Upper lobe of right lung (tissue), 1 donor: ENCODE measurements at regions of chr1 and their contacts with region 1.

Region 1: DNA sequence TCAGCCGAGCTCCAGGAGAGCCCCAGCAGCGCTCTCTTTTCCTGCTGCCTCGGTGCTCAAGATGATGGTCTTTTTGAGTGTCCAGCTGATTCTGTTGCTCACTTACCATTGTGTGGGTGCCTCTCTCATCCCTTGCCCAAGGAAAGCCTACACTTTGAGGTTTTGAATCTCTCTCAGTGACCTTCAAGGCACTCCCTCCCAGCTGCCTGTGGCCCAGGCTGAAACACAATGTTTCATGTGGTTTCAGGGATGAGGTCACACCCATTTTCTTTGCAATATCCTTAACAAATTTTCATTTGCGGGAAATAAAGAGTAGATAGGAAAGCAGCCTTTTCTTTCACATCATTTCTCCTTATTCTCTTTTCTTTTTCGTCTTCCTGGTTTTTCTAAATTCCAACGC is 12.6 kb upstream of the MRPS14 start:
- DNase-seq: no peak
- ATAC-seq: no peak
- H3K4me3 ChIP-seq: no peak overlapping the region
- H3K27ac ChIP-seq: no peak overlapping the region
- H3K4me1 ChIP-seq: no peaks in the 10 kb centered on the region
- H3K27me3 ChIP-seq: no peaks in the 10 kb centered on the region
- CTCF ChIP-seq: no peak

Region 2: GRCh38 chr1:174942547-174943255 is 93.2 kb before region 1 on chr1:
- intact Hi-C with region 1: no loop called
- DNase-seq: no peak
- ATAC-seq: peak; percentile 90
- H3K4me3 ChIP-seq: no peak overlapping the region
- H3K27ac ChIP-seq: peak overlapping the region; percentile 28
- H3K4me1 ChIP-seq: peaks cover 19% of the 10 kb centered on the region
- H3K27me3 ChIP-seq: no peaks in the 10 kb centered on the region
- CTCF ChIP-seq: no peak

Region 3: GRCh38 chr1:174953285-174954072 is 82.4 kb before region 1 on chr1:
- intact Hi-C with region 1: no loop called
- DNase-seq: no peak
- ATAC-seq: no peak
- H3K4me3 ChIP-seq: no peak overlapping the region
- H3K27ac ChIP-seq: peak overlapping the region; percentile 0
- H3K4me1 ChIP-seq: peaks cover 11% of the 10 kb centered on the region
- H3K27me3 ChIP-seq: no peaks in the 10 kb centered on the region
- CTCF ChIP-seq: no peak

Region 4: GRCh38 chr1:175319418-175320230 is 283.8 kb after region 1 on chr1:
- intact Hi-C with region 1: loop called (anchors 10 kb)
- DNase-seq: peak; percentile 80
- ATAC-seq: peak; percentile 95
- H3K4me3 ChIP-seq: no peak overlapping the region
- H3K27ac ChIP-seq: peak overlapping the region; percentile 9
- H3K4me1 ChIP-seq: peaks cover 27% of the 10 kb centered on the region
- H3K27me3 ChIP-seq: no peaks in the 10 kb centered on the region
- CTCF ChIP-seq: peak; percentile 92